ENCODE measurements at regions of chr11 and their contacts with region 1.

Region 1: GRCh38 chr11:3939211-3939610 is 83.7 kb downstream of the STIM1 start:
- DNase-seq: no peak
- H3K4me3 ChIP-seq: no peak overlapping the region
- H3K27ac ChIP-seq: peak overlapping the region in 2 of 8 donors; percentile 2 to 11
- H3K4me1 ChIP-seq: peaks cover 26 to 90% (median 48%) of the 10 kb centered on the region in 6 donors
- H3K27me3 ChIP-seq: no peaks in the 10 kb centered on the region
- CTCF ChIP-seq: no peak
- POLR2A ChIP-seq: no peak

Region 2: DNA sequence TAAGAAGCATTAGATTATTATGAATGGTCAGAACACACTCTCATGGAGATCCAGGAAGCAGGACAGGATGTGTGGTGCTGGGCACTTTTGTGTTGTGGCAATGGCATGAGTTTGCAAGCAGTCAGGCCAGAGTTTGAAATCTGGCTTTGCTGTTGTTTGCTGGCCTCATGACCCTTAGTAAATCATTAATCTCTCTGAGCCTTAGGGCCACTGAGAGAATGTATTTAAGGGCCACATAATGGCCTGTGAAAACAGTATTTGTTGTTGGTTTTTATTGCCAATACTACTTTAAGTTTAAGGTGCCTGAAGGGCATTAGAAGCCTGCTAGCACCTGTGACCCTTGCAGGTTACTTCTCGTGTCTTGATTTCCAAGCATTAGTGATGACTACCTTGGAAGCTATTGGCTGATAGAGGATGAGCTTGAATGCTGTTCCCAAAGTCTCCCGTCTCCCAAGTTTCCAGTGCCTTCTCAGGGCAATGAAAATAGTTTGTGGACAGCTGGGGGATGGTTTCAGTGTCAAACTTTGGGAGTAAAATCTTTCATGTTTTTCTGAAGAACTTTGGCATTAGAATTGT is 59.2 kb before region 1 on chr11:
- intact Hi-C with region 1: loop called (anchors 10 kb)
- DNase-seq: no peak
- H3K4me3 ChIP-seq: no peak overlapping the region
- H3K27ac ChIP-seq: peak overlapping the region; percentile 51 to 77 (median 70)
- H3K4me1 ChIP-seq: peaks cover 48 to 100% (median 74%) of the 10 kb centered on the region in 6 donors
- H3K27me3 ChIP-seq: no peaks in the 10 kb centered on the region
- CTCF ChIP-seq: no peak
- POLR2A ChIP-seq: no peak

Region 3: DNA sequence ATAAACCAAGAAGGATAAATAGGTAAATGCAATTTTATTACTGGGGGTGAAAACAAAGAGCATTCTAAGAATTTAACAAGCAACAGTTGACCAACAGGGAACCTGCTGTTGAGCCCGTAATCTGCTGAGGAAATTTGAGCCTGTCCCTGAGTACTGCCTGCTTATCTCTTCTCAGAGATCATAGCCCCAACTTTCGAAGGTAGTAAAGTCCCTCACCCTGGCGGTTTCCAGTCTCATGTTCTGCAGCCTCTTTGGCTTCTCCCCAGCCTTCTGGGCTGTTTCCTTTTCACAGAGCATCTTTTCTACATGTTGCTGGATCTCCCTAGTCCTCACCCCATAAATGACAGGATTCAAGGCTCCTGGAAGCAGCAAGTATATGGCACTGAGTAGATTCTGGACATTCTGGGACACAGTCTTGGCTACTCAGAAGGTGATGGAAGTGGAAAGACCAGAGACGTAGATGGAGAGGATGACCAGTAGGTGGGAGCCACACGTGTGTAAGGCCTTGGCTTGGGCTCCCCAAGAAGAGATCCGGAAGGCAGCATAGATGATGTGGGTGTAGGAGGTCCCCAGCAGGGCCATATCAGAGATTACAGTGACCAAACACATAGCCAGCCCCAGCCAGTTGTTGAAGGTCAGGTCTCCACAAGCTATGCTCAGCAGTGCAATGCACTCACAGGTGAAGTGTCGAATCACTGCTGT is 207.0 kb after region 1 on chr11:
- intact Hi-C with region 1: no loop called
- DNase-seq: no peak
- H3K4me3 ChIP-seq: no peak overlapping the region
- H3K27ac ChIP-seq: no peak overlapping the region
- H3K4me1 ChIP-seq: no peaks in the 10 kb centered on the region
- H3K27me3 ChIP-seq: no peaks in the 10 kb centered on the region
- CTCF ChIP-seq: no peak
- POLR2A ChIP-seq: no peak